K562 (cell line): ENCODE measurements at regions of chr1 and their contacts with region 1.

Region 1: DNA sequence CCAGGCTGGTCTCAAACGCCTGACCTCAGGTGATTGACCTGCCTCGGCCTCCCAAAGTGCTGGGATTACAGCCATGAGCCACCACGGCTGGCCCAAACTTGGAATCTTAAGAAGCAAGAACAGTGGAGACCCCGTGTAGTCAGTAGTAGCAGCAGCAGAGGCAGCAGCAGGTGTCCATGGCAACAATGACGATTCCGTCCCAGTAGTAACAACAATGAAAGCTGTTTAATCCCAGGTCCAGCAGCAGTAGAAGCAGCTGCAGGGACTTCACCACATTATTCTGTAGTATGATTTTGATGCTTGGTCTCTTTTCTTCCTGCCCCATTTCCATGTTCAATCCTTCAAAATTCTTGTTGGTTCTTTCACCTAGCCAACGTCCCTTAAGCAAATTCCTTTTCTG is 69.6 kb upstream of the KCTD3 start:
- DNase-seq: no peak
- ATAC-seq: no peak
- H3K4me3 ChIP-seq: no peak overlapping the region
- H3K27ac ChIP-seq: no peak overlapping the region
- H3K4me1 ChIP-seq: no peaks in the 10 kb centered on the region
- H3K27me3 ChIP-seq: no peaks in the 10 kb centered on the region
- CTCF ChIP-seq: no peak
- EP300 ChIP-seq: no peak
- POLR2A ChIP-seq: no peak
- RAD21 ChIP-seq: no peak

Region 2: GRCh38 chr1:215433237-215433636 is 64.3 kb before region 1 on chr1:
- CTCF ChIA-PET with region 1: no interaction called
- POLR2A ChIA-PET with region 1: no interaction called
- in situ Hi-C with region 1: no loop called
- intact Hi-C with region 1: loop called (anchors 10 kb)
- DNase-seq: no peak
- ATAC-seq: no peak
- H3K4me3 ChIP-seq: no peak overlapping the region
- H3K27ac ChIP-seq: no peak overlapping the region
- H3K4me1 ChIP-seq: no peaks in the 10 kb centered on the region
- H3K27me3 ChIP-seq: no peaks in the 10 kb centered on the region
- CTCF ChIP-seq: no peak
- EP300 ChIP-seq: no peak
- POLR2A ChIP-seq: no peak
- RAD21 ChIP-seq: no peak

Region 3: GRCh38 chr1:215484171-215484939 is 13.2 kb before region 1 on chr1:
- CTCF ChIA-PET with region 1: no interaction called
- POLR2A ChIA-PET with region 1: no interaction called
- in situ Hi-C with region 1: no loop called
- intact Hi-C with region 1: no loop called
- DNase-seq: no peak
- ATAC-seq: no peak
- H3K4me3 ChIP-seq: no peak overlapping the region
- H3K27ac ChIP-seq: no peak overlapping the region
- H3K4me1 ChIP-seq: no peaks in the 10 kb centered on the region
- H3K27me3 ChIP-seq: no peaks in the 10 kb centered on the region
- CTCF ChIP-seq: no peak
- EP300 ChIP-seq: no peak
- POLR2A ChIP-seq: no peak
- RAD21 ChIP-seq: no peak

Region 4: DNA sequence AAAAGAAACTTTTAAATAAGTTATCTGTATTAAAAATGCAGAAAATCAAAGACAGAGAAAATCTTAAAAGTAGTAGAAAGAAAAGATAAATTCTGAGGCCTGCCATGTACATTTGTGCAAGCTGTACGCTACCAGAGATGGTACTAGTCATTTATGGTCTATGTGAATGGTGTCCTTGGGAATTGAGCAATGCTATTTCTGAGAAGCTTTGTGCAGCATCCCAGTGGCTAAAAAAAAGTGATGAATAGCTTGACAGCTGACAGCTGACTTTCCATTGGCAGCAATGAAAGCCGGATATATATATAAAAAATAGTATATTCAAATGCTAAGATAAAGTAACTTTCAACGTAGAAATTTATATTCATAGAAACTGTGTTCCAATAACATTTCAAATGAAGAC is 10.8 kb after region 1 on chr1:
- CTCF ChIA-PET with region 1: no interaction called
- POLR2A ChIA-PET with region 1: no interaction called
- in situ Hi-C with region 1: no loop called
- intact Hi-C with region 1: no loop called
- DNase-seq: no peak
- ATAC-seq: no peak
- H3K4me3 ChIP-seq: no peak overlapping the region
- H3K27ac ChIP-seq: no peak overlapping the region
- H3K4me1 ChIP-seq: no peaks in the 10 kb centered on the region
- H3K27me3 ChIP-seq: no peaks in the 10 kb centered on the region
- CTCF ChIP-seq: no peak
- EP300 ChIP-seq: no peak
- POLR2A ChIP-seq: no peak
- RAD21 ChIP-seq: no peak